CD8-positive, alpha-beta memory T cell (primary cell): ENCODE measurements at regions of chr7 and their contacts with region 1.

Region 1: GRCh38 chr7:66844552-66845378 is 76.3 kb upstream of the TMEM248 start:
- DNase-seq: peak; percentile 98 to 100 (median 99)
- H3K4me3 ChIP-seq: peak overlapping the region; percentile 68
- H3K4me3 Mint-ChIP-seq: peak overlapping the region; percentile 94 to 100 (median 98)
- H3K27ac ChIP-seq: peak overlapping the region; percentile 96
- H3K27ac Mint-ChIP-seq: peak overlapping the region; percentile 97 to 100 (median 100)
- H3K4me1 ChIP-seq: peaks cover 16% of the 10 kb centered on the region
- H3K4me1 Mint-ChIP-seq: peaks cover 17 to 29% (median 28%) of the 10 kb centered on the region in 3 donors
- H3K27me3 ChIP-seq: no peaks in the 10 kb centered on the region
- H3K27me3 Mint-ChIP-seq: peaks cover 0 to 6% of the 10 kb centered on the region in 2 donors

Region 2: GRCh38 chr7:66493235-66494181 is 351.3 kb before region 1 on chr7:
- CTCF ChIA-PET with region 1: interaction called, 5 read pairs
- POLR2A ChIA-PET with region 1: interaction called, 20 read pairs
- DNase-seq: peak; percentile 94 to 98 (median 97)
- H3K4me3 ChIP-seq: peak overlapping the region; percentile 88
- H3K4me3 Mint-ChIP-seq: peak overlapping the region; percentile 93 to 98 (median 94)
- H3K27ac ChIP-seq: peak overlapping the region; percentile 97
- H3K27ac Mint-ChIP-seq: peak overlapping the region; percentile 98 to 100 (median 99)
- H3K4me1 ChIP-seq: peaks cover 6% of the 10 kb centered on the region
- H3K4me1 Mint-ChIP-seq: peaks cover 13 to 25% (median 19%) of the 10 kb centered on the region in 3 donors
- H3K27me3 ChIP-seq: no peaks in the 10 kb centered on the region
- H3K27me3 Mint-ChIP-seq: no peaks in the 10 kb centered on the region

Region 3: DNA sequence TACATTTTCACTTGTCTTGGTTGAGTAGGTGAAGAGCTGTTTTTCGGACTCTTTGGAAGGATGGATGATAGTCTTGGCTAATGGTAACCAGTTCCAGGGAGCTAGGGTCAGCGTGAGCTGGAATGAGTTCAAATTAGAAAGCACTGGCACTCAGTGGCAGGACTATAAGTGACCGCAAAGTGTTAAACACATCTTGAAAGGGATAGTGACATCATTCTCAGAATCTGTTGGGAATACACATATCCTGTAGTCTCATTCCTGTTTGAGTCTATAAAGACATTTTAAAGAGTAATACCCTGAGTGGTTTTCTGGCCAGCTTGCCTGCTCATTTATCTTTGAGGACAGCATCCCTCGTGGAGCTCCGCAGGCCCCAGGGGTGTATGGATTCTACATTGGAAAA is 19.5 kb after region 1 on chr7:
- CTCF ChIA-PET with region 1: no interaction called
- POLR2A ChIA-PET with region 1: no interaction called
- DNase-seq: no peak
- H3K4me3 ChIP-seq: no peak overlapping the region
- H3K4me3 Mint-ChIP-seq: no peak overlapping the region
- H3K27ac ChIP-seq: no peak overlapping the region
- H3K27ac Mint-ChIP-seq: no peak overlapping the region
- H3K4me1 ChIP-seq: no peaks in the 10 kb centered on the region
- H3K4me1 Mint-ChIP-seq: peaks cover 0 to 5% (median 0%) of the 10 kb centered on the region in 3 donors
- H3K27me3 ChIP-seq: no peaks in the 10 kb centered on the region
- H3K27me3 Mint-ChIP-seq: no peaks in the 10 kb centered on the region

Region 4: GRCh38 chr7:66920769-66921395 is 76.1 kb after region 1 on chr7 and contains the start of gene TMEM248:
- CTCF ChIA-PET with region 1: no interaction called
- POLR2A ChIA-PET with region 1: interaction called, 24 read pairs
- DNase-seq: peak; percentile 84 to 94 (median 90)
- H3K4me3 ChIP-seq: peak within 1 kb of the TSS; percentile 98
- H3K4me3 Mint-ChIP-seq: peak within 1 kb of the TSS; percentile 97 to 99 (median 98)
- H3K27ac ChIP-seq: peak within 1 kb of the TSS; percentile 89
- H3K27ac Mint-ChIP-seq: peak within 1 kb of the TSS; percentile 89 to 99 (median 99)
- H3K4me1 ChIP-seq: peaks cover 32% of the 10 kb centered on the region
- H3K4me1 Mint-ChIP-seq: peaks cover 30 to 49% (median 41%) of the 10 kb centered on the region in 3 donors
- H3K27me3 ChIP-seq: no peaks in the 10 kb centered on the region
- H3K27me3 Mint-ChIP-seq: peaks cover 0 to 12% of the 10 kb centered on the region in 2 donors
- total RNA-seq, gene TMEM248: 85.8 to 91.6 TPM